ENCODE measurements at regions of chr10 and their contacts with region 1.

Region 1: DNA sequence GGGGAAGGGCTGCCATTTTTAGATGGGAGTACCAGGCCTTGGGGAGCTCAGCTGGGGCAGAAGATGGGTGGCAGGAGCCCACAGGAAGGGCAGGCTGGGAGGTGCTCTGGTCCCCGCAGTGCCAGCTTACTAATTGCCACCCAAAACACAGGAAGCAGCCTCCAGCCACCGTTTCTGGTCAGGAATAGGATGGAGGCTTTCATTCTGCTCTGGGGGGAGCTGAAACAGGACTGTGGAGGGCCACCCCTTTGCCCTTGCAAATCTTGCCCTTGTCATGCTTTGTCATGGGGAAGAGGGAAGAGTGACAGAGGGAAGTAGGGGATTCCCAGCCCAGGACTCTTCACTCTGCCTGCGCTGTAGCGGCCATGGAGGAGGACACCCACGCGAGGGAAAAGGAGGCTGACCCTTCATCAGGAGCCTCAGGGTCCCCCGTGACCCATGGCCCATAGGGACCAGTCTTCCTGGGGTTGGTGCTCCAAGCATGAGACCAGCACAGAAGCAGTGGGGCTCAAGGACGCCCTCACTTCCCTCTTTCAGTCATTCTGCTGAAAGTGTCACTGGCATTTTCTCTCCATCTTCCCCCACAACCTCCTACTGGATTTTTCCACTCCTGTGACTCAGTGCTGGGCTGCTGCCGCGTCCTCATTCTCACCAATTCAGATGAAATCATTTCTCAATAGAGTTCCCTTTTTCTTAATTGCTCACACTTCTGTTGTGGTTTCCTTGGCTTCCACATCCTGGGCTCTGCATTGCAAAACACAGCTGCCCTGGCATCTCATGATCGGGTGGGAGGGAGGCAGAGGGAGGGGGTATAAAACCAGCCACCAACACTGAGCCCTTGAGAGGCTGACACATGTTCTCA is 61.9 kb downstream of the MKI67 start:
- DNase-seq: peak; percentile 88
- ATAC-seq: peak; percentile 82
- H3K4me3 Mint-ChIP-seq: peak overlapping the region; percentile 59
- H3K27ac Mint-ChIP-seq: peak overlapping the region; percentile 90
- H3K4me1 Mint-ChIP-seq: peaks cover 69% of the 10 kb centered on the region
- H3K27me3 Mint-ChIP-seq: no peaks in the 10 kb centered on the region

Region 2: DNA sequence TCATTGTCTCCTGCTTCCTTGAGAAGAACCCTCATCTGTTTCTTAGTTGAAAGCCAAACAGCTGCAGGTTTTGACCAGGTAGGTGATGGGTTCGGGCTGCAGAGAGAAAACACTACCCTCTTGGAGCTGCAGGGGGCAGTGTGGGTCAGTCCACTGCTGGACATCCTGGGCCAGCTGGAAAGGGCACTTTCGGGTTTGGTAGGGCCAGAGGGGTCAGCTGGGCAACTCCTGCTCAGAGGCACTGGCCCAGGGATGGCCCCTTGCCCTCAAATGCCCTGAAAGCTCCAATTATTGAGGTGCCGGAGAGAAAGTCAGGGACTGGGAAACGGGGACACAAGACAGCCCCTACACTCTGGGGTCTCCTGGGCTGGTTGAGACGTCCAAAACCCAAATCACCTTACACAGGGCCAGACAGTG is 28.8 kb before region 1 on chr10:
- CTCF ChIA-PET with region 1: interaction called, 120 read pairs
- POLR2A ChIA-PET with region 1: interaction called, 5 read pairs
- intact Hi-C with region 1: loop called (anchors 1 kb)
- DNase-seq: peak; percentile 81
- ATAC-seq: peak; percentile 88
- H3K4me3 Mint-ChIP-seq: no peak overlapping the region
- H3K27ac Mint-ChIP-seq: no peak overlapping the region
- H3K4me1 Mint-ChIP-seq: peaks cover 6% of the 10 kb centered on the region
- H3K27me3 Mint-ChIP-seq: no peaks in the 10 kb centered on the region

Region 3: GRCh38 chr10:128097783-128098182 is 33.4 kb after region 1 on chr10:
- CTCF ChIA-PET with region 1: no interaction called
- POLR2A ChIA-PET with region 1: no interaction called
- intact Hi-C with region 1: no loop called
- DNase-seq: no peak
- ATAC-seq: no peak
- H3K4me3 Mint-ChIP-seq: no peak overlapping the region
- H3K27ac Mint-ChIP-seq: no peak overlapping the region
- H3K4me1 Mint-ChIP-seq: peaks cover 22% of the 10 kb centered on the region
- H3K27me3 Mint-ChIP-seq: no peaks in the 10 kb centered on the region

Region 4: DNA sequence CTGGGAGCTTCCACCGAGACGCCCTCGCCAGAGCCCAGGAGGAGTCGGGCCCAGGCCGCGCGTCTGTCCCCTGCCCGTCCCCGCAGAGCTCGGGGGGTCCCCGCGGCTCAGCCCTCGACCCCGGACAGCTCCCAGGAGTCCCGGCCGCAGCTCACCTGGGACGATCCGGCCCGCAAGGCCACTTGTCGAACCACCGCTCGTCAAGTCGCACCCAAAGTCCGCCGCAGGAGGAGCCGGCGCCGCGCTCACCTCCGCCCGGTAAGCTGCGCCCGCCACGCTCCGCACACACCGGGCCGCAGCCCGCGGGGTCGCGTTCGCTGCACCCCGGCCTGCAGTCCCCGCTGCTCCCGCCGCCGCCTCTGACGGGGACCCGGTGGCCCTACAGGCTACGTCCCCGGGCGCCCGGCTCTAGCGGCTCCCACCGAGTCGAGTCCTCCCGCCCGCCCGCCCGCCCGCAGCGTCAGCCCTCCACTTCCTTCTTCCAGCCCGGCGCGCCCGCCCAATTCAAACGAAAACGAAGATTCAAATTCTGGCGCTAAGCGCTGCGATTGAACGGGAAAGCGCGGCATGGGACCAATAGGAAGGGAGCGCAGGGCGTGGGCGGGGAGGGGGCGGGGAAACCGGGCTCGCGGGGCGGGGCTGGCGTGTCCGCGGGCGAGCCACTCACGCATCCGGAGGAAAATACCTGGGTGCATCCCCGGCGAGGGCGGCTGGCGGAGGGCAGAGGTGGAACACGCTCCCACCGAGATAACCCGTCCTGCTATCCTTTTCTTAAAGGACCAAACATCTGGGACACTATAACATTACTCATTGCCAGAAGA is 61.8 kb after region 1 on chr10 and contains the start of gene MKI67:
- CTCF ChIA-PET with region 1: interaction called, 4 read pairs
- POLR2A ChIA-PET with region 1: interaction called, 6 read pairs
- intact Hi-C with region 1: loop called in 1 of 2 experiments (anchors 1 kb)
- DNase-seq: peak; percentile 96
- ATAC-seq: peak; percentile 93
- H3K4me3 Mint-ChIP-seq: peak within 1 kb of the TSS; percentile 93
- H3K27ac Mint-ChIP-seq: peak within 1 kb of the TSS; percentile 90
- H3K4me1 Mint-ChIP-seq: peaks cover 27% of the 10 kb centered on the region
- H3K27me3 Mint-ChIP-seq: peaks cover 13% of the 10 kb centered on the region
- total RNA-seq, gene MKI67: 234 to 244 TPM

Measured in activated CD4-positive, alpha-beta T cell treated with anti-CD3 and anti-CD28 coated beads for 36 hours (primary cell).